Breast epithelium (tissue), 4 donors: ENCODE measurements at regions of chr17 and their contacts with region 1.

Region 1: GRCh38 chr17:28902819-28903545 is at the start of gene DHRS13:
- DNase-seq: peak; percentile 66 to 86
- H3K4me3 ChIP-seq: peak within 1 kb of the TSS; percentile 67 to 98 (median 76)
- H3K27ac ChIP-seq: peak within 1 kb of the TSS; percentile 86 to 94
- H3K4me1 ChIP-seq: peaks cover 0 to 5% of the 10 kb centered on the region in 2 donors
- H3K27me3 ChIP-seq: no peaks in the 10 kb centered on the region
- CTCF ChIP-seq: peak; percentile 48 to 76 (median 52)
- POLR2A ChIP-seq: no peak
- total RNA-seq, gene DHRS13: 3.2 to 20.6 (median 14.2) TPM

Region 2: DNA sequence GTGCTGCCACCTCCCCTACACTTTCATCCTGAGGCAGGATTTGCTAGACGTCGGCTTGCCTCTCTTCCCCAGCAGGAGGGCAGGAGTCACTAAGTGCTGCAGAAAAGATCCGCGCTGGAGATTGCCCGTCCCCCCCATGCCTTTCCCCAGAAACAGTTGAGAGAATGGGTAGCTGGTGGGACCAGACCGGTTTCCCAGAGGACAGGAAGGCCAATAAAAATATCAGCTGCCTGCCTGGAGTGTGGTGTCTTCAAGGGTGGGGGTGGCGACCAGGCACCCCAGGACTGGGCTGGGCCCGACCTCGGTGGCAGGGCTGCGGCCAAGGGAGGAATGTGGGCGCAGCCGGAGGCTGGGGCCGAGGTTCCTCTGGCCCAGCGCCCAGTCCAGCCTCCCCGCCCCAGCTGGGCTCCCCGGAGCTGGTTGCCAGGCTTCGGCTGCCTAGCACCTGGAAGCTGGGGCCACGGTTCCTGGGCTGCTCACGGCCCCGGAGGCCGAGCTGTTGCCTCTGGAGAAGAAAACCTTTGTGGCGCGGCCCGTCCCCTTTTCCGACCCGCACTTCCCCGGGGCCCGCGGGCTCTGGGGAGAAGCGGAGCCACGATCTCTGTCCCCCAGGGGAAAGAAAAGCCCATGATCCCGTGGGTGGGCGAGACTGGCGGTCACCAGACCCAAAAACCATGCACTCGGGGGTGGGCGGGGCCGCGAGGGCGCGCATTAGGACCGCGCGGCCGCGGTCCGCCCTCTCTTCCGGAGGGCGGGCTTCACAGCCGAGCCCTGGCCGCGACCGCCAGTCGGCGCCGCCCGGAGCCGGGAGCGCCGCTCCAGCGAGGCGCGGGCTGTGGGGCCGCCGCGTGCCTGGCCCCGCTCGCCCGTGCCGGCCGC is 159.5 kb before region 1 on chr17 and contains the start of gene TRAF4:
- intact Hi-C with region 1: loop called (anchors 10 kb)
- DNase-seq: peak; percentile 77 to 81
- H3K4me3 ChIP-seq: peak within 1 kb of the TSS; percentile 55 to 99 (median 90)
- H3K27ac ChIP-seq: peak within 1 kb of the TSS; percentile 99 to 100
- H3K4me1 ChIP-seq: peaks cover 10 to 12% of the 10 kb centered on the region in 2 donors
- H3K27me3 ChIP-seq: no peaks in the 10 kb centered on the region
- CTCF ChIP-seq: peak in 2 of 3 donors; percentile 25 to 41
- POLR2A ChIP-seq: peak; percentile 44
- total RNA-seq, gene TRAF4: 12.3 to 63.6 (median 48.9) TPM

Region 3: DNA sequence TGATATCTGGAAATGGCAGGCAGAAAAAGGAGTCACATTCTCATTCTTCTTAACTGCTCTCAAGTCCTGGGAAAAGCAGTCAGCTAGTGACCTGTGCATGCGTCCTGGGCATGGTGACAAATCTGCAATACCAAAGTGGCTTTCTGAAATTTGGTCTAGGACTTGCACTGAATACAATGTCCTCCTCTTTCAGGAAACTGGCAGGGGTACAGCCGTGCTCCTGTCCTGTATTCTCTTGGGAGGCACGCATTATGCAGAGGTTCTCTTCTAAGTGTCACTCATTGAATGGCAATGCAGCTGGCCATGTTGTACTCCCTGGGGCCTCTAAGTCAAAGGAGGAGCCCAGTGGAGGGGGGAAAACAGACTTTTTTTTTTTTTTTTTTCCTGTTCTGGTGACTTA is 37.7 kb after region 1 on chr17:
- intact Hi-C with region 1: loop called (anchors 1 kb)
- DNase-seq: no peak
- H3K4me3 ChIP-seq: no peak overlapping the region
- H3K27ac ChIP-seq: no peak overlapping the region
- H3K4me1 ChIP-seq: peaks cover 0 to 37% of the 10 kb centered on the region in 2 donors
- H3K27me3 ChIP-seq: no peaks in the 10 kb centered on the region
- CTCF ChIP-seq: no peak
- POLR2A ChIP-seq: no peak